Activated CD4-positive, alpha-beta T cell treated with anti-CD3 and anti-CD28 coated beads, Interleukin-2, amount 10 ng/mL, durations not matched to agents 7 days and 5 days (primary cell): ENCODE measurements at regions of chr6 and their contacts with region 1.

Region 1: GRCh38 chr6:31652925-31653718 is 661 bp upstream of the BAG6 start:
- DNase-seq: peak; percentile 91
- H3K4me3 Mint-ChIP-seq: peak overlapping the region; percentile 95
- H3K27ac Mint-ChIP-seq: peak overlapping the region; percentile 100
- H3K4me1 Mint-ChIP-seq: peaks cover 60% of the 10 kb centered on the region
- H3K27me3 Mint-ChIP-seq: no peaks in the 10 kb centered on the region

Region 2: DNA sequence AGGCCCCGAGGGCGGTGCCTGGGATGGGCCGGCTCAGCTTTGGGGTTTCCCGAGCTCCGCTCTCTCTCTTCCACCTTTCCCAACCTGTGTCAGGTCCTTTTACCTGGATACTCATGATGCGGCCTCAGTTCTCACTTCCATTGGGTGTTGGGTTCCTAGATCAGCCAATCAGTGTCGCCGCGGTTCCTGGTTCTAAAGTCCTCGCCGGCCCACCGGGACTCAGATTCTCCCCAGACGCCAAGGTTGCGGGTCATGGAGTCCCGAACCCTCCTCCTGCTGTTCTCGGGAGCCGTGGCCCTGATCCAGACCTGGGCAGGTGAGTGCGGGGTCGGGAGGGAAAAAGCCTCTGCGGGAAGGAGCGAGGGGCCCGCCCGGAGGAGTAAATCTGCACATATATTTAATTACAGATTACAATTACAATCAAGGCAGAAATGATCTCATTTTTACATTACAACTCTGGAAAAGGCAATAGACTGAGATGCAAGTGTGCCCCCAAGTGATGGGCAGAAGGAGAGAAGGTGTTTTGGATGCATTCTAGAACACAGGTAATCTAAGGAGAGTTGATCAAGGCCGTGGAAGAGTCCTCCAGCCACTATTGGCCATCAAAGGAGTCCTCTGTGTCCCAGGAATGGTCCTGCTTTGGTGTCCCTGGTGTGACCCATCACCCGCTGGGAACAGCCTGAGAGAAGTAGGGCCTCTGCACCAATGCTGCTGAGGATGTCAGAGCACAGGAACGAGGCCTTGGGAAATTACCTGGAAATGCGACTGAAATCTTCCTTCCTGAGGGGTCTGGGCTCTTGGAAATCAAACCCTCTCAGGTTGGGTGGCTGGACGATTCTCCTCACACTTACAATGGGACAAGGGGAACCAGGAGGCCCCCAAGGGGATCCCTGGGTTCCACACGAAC is 189.9 kb before region 1 on chr6:
- CTCF ChIA-PET with region 1: no interaction called
- POLR2A ChIA-PET with region 1: no interaction called
- DNase-seq: peak; percentile 93
- H3K4me3 Mint-ChIP-seq: peak overlapping the region; percentile 99
- H3K27ac Mint-ChIP-seq: peak overlapping the region; percentile 94
- H3K4me1 Mint-ChIP-seq: peaks cover 59% of the 10 kb centered on the region
- H3K27me3 Mint-ChIP-seq: peaks cover 2% of the 10 kb centered on the region

Region 3: DNA sequence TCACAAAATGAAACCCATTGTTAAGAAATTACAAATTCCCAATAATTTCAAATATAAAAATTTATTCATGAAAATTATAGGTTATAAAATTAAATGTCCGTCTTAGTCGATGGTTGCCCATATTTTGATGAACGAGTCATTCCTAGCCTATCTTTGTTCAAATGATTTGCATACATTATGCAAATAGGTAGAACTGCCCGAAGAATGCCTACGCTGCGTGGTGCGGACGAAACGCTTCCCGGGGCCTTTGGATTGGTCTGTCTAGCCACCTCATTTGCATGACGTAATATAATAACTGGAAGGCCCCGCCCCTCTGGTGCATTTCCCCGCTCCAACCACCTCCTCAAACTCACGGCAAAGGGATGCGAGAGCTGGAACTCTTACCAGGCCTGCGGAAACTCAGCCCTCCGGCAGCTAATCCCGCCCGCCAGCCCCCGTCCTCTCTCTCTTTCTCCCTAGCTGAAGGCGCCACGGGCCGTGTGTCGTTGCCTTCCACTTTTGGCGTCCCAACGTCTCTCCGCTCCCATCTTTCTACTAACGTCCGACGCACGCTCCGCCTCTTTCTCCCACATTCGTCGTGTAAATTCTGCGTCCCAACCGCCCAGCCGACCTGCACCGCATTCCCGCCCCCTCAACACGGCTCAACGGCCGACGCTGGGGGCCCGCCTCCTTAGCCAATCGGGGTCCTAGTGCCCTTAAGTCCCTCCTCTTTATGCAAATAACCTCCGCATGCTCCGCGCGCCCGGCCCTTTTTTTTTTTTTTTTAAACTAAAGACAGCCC is 33.1 kb before region 1 on chr6:
- CTCF ChIA-PET with region 1: interaction called, 16 read pairs
- POLR2A ChIA-PET with region 1: interaction called, 10 read pairs
- DNase-seq: peak; percentile 98
- H3K4me3 Mint-ChIP-seq: peak overlapping the region; percentile 86
- H3K27ac Mint-ChIP-seq: peak overlapping the region; percentile 95
- H3K4me1 Mint-ChIP-seq: peaks cover 51% of the 10 kb centered on the region
- H3K27me3 Mint-ChIP-seq: no peaks in the 10 kb centered on the region

Region 4: DNA sequence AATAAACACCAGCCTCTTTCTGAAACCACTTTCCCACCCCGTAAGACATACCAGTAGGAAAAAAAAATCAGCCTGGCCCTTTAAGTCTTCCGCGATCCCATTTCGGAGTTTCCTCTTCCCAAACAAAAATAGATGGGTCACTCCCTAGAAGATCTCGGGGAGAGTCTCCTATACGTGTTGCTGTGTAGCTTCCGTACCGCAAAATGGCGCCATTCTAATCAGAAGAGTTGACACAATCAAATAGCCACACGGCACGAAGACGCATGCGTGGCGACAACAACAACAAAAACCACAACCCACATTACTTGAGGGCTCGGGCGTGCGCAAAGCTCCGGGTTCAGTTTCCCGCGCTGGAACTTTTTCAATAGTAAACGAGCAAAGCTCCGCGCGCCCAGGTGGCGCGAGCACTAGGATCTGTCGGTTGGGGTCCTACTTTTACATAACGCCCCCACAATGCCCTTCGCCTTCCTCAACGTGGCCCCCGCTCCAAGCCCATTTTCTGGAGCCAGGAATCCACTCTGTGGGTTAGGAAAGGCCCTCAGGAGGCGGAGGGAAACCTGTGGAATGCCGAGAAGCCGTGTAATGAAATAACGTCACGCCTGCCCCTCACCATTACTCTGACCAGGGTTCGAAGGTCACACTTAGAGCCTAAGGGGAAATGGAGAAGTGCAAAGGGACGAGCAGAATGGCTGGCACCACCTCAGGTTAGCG is 11.8 kb after region 1 on chr6 and contains the start of gene GPANK1:
- CTCF ChIA-PET with region 1: interaction called, 32 read pairs
- POLR2A ChIA-PET with region 1: interaction called, 6 read pairs
- DNase-seq: peak; percentile 95
- H3K4me3 Mint-ChIP-seq: peak within 1 kb of the TSS; percentile 87
- H3K27ac Mint-ChIP-seq: peak within 1 kb of the TSS; percentile 94
- H3K4me1 Mint-ChIP-seq: peaks cover 67% of the 10 kb centered on the region
- H3K27me3 Mint-ChIP-seq: no peaks in the 10 kb centered on the region
- total RNA-seq, gene GPANK1: 34.4 to 42.9 TPM

Region 5: GRCh38 chr6:31680840-31681671 is 27.9 kb after region 1 on chr6 and contains the start of gene LY6G5C:
- CTCF ChIA-PET with region 1: no interaction called
- POLR2A ChIA-PET with region 1: no interaction called
- DNase-seq: peak; percentile 66
- H3K4me3 Mint-ChIP-seq: peak within 1 kb of the TSS; percentile 72
- H3K27ac Mint-ChIP-seq: peak within 1 kb of the TSS; percentile 62
- H3K4me1 Mint-ChIP-seq: peaks cover 40% of the 10 kb centered on the region
- H3K27me3 Mint-ChIP-seq: no peaks in the 10 kb centered on the region
- total RNA-seq, gene LY6G5C: 1.7 to 2.1 TPM